Cardiac septum (tissue), 1 donor: ENCODE measurements at regions of chr11 and their contacts with region 1.

Region 1: DNA sequence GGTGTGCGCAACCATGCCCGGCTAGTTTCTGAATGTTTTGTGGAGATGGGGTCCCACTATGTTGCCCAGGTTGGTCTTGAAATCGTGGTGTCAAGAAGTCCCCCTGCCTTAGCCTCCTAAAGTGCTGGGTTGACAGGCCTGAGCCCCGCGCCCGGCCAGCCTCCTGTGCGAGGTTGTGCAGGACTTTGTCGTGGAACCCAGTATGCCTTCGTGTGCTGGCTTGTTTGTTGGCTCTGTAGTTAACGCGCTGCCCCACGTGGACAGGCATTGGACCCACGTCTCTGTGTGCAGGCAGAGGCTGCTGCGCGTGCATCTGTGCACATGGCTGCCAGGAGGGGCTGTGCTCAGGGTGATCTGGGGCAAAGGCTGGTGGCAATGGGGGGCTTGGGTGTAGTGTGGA is 33.9 kb upstream of the ZNF195 start:
- DNase-seq: peak; percentile 50

Region 2: DNA sequence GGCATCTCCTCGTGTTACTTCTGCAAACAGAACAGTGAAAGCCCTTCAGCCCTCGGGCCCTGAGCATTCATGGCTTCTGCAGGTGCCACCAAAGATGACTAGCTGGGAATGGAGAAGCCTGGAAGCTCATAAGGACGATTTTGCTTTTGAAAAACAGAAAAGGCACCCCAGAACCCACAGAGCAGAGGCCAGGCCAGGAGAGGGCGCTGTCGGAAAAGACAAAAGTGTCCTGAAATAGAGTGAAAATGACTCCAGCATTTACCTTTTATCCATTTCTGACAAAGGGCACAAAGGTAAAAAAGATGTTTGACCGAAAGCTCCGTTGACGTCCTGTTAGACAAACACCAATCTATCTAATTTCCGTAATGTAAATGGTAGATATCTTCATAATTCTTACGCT is 71.5 kb before region 1 on chr11:
- intact Hi-C with region 1: loop called (anchors 10 kb)
- DNase-seq: no peak

Region 3: GRCh38 chr11:3609416-3610265 is 196.8 kb after region 1 on chr11:
- intact Hi-C with region 1: no loop called
- DNase-seq: peak; percentile 10